ENCODE measurements at regions of chr3 and their contacts with region 1.

Region 1: GRCh38 chr3:13452490-13453335 is 27.4 kb upstream of the HDAC11 start:
- DNase-seq: peak; percentile 28 to 67 (median 52)
- H3K4me3 ChIP-seq: peak overlapping the region in 1 of 4 donors; percentile 57
- H3K27ac ChIP-seq: peak overlapping the region in 3 of 5 donors; percentile 75 to 93 (median 82)
- H3K4me1 ChIP-seq: peaks cover 0 to 11% of the 10 kb centered on the region in 2 donors
- H3K27me3 ChIP-seq: no peaks in the 10 kb centered on the region
- CTCF ChIP-seq: peak in 5 of 6 experiments; percentile 62 to 76 (median 70)
- POLR2A ChIP-seq: no peak

Region 2: DNA sequence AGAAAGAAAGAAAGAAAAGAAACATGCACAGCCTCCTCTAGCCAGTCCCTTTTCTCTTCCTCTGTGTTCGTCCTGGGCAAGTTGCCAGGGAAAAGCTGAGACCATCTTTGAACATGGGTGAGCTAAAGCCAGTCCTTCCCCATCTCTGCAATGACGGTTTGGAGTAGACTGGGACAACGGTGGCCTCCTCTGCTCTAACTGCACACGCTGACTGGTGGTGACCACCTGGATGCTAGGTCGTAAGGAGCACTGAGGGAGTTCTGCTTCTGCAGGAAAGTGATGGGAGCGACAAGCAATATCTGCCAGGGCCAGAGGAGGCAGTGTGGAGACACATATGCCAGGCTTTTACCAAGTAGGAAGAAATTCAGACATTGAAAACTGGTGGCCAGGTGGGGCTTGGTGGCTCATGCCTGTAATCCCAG is 144.3 kb before region 1 on chr3:
- intact Hi-C with region 1: loop called in 1 of 2 experiments (anchors 10 kb)
- DNase-seq: peak in 6 of 7 donors; percentile 29 to 65 (median 56)
- H3K4me3 ChIP-seq: no peak overlapping the region
- H3K27ac ChIP-seq: no peak overlapping the region
- H3K4me1 ChIP-seq: no peaks in the 10 kb centered on the region
- H3K27me3 ChIP-seq: no peaks in the 10 kb centered on the region
- CTCF ChIP-seq: peak; percentile 29 to 53 (median 44)
- POLR2A ChIP-seq: no peak